ENCODE measurements at regions of chr1 and their contacts with region 1.

Region 1: GRCh38 chr1:223133824-223134435 is 9.1 kb downstream of the TLR5 start:
- DNase-seq: peak; percentile 84
- H3K4me3 ChIP-seq: peak overlapping the region; percentile 17 to 38 (median 32)
- H3K27ac ChIP-seq: peak overlapping the region; percentile 30
- H3K4me1 ChIP-seq: peaks cover 30% of the 10 kb centered on the region
- H3K27me3 ChIP-seq: no peaks in the 10 kb centered on the region
- CTCF ChIP-seq: peak; percentile 82 to 94

Region 2: GRCh38 chr1:222711319-222712252 is 422.3 kb before region 1 on chr1:
- CTCF ChIA-PET with region 1: no interaction called
- dilution Hi-C with region 1: no loop called
- in situ Hi-C with region 1: no loop called
- intact Hi-C with region 1: no loop called
- DNase-seq: peak; percentile 74
- H3K4me3 ChIP-seq: peak overlapping the region; percentile 57 to 85 (median 84)
- H3K27ac ChIP-seq: peak overlapping the region; percentile 80
- H3K4me1 ChIP-seq: peaks cover 13% of the 10 kb centered on the region
- H3K27me3 ChIP-seq: no peaks in the 10 kb centered on the region
- CTCF ChIP-seq: no peak

Region 3: GRCh38 chr1:223153177-223154119 is 19.5 kb after region 1 on chr1:
- CTCF ChIA-PET with region 1: no interaction called
- dilution Hi-C with region 1: no loop called
- in situ Hi-C with region 1: no loop called
- intact Hi-C with region 1: no loop called
- DNase-seq: no peak
- H3K4me3 ChIP-seq: no peak overlapping the region
- H3K27ac ChIP-seq: no peak overlapping the region
- H3K4me1 ChIP-seq: no peaks in the 10 kb centered on the region
- H3K27me3 ChIP-seq: no peaks in the 10 kb centered on the region
- CTCF ChIP-seq: no peak

Region 4: DNA sequence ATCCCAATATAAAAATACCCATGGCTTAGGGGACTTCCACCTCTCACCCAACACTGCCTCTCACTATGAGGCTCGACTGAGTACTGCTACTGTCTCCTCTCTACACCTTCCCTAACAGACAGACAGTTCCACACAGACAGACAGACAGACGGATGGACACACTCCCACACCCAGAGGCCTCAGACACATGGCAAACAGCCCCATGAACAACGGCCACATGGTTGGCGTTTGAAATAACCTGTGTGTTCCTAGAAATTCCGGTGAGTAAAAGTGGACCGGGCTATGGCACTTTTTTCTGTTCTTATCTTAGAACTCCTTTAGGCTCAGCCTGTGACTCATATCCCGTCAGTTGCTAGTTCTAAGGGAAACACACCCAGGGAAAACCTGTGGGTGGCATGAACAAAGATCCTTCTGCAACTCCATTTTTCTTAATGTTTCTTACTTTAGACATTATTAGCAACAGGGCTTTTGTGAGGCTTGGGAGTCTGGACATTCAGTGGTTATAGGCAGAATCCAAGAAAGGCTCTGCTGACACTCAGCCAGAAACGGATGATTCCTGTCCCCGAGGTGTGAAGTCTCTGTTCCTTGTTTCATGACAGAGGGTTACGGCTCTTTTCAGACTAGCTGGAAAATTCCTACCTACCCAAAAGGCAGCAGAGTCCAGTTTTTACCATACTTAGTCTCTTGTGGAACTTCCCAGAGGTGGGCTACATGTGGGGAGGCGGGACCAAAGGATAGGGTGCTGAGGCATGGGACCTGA is 99.7 kb after region 1 on chr1:
- CTCF ChIA-PET with region 1: interaction called, 28 read pairs
- dilution Hi-C with region 1: no loop called
- in situ Hi-C with region 1: no loop called
- intact Hi-C with region 1: no loop called
- DNase-seq: peak; percentile 94
- H3K4me3 ChIP-seq: no peak overlapping the region
- H3K27ac ChIP-seq: peak overlapping the region; percentile 91
- H3K4me1 ChIP-seq: peaks cover 58% of the 10 kb centered on the region
- H3K27me3 ChIP-seq: no peaks in the 10 kb centered on the region
- CTCF ChIP-seq: no peak

Region 5: DNA sequence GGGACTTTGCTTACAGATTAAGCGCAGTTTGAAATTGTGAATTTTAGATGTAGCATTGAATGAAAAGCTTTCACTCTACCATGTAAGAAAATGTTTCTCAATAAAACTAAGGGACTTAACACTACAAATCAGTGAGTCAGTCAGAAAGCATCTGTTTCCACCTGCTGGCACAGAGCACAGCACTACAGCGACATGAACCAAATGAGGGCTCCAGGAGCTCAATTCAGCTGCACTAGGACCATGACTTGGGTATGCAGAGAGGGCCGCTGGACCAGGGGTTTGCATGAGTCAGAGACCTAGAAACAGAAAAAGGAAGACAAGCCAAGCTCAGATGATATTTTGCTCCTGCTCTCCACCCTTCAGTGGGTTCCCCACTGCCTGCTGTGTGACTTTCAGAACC is 224.9 kb after region 1 on chr1:
- CTCF ChIA-PET with region 1: interaction called, 5 read pairs
- dilution Hi-C with region 1: no loop called
- in situ Hi-C with region 1: no loop called
- intact Hi-C with region 1: loop called (anchors 1 kb)
- DNase-seq: peak; percentile 21
- H3K4me3 ChIP-seq: no peak overlapping the region
- H3K27ac ChIP-seq: no peak overlapping the region
- H3K4me1 ChIP-seq: peaks cover 21% of the 10 kb centered on the region
- H3K27me3 ChIP-seq: peaks cover 7% of the 10 kb centered on the region
- CTCF ChIP-seq: peak in 1 of 2 donors; percentile 58

Region 6: GRCh38 chr1:223670458-223671168 is 536.7 kb after region 1 on chr1:
- CTCF ChIA-PET with region 1: no interaction called
- dilution Hi-C with region 1: no loop called
- in situ Hi-C with region 1: loop called in 1 of 2 experiments (anchors 10 kb)
- intact Hi-C with region 1: loop called (anchors 5 kb)
- DNase-seq: peak; percentile 57
- H3K4me3 ChIP-seq: no peak overlapping the region
- H3K27ac ChIP-seq: no peak overlapping the region
- H3K4me1 ChIP-seq: peaks cover 29% of the 10 kb centered on the region
- H3K27me3 ChIP-seq: no peaks in the 10 kb centered on the region
- CTCF ChIP-seq: peak; percentile 85 to 86

Measured in mammary epithelial cell (primary cell).